Right cardiac atrium (tissue), 5 donors: ENCODE measurements at regions of chr1 and their contacts with region 1.

Region 1: DNA sequence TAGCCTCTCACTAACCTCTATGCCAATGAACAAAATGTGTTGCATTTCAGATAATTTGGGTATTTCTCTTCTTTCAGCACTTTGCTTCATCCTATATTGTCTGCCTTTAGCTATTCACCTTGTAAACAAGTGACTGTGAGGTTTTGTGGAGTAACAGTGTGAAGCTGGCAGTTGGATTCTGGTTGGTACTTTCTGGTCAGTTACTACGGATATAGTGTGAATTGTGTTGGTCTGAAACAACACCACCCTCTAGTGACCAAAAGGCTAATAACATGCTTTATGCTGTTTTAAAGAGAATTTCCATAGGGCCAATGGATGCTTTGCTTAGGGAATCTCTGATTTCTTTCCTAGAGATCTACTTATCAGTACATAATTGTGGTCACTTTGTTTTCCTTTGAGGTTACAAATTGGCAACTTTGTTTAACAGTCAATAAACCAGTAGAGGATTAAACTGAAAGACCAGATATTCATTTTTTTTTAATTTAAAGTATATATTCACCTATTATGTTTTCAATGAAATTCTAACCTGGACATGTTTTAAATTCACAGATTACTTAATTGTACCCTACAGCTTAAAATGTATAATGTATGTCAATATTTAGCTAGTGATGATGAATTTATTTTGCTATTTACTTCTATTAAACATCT is 2.5 kb upstream of the PTGER3 start:
- DNase-seq: no peak
- ATAC-seq: peak; percentile 27 to 50
- H3K4me3 ChIP-seq: no peak overlapping the region
- H3K27ac ChIP-seq: no peak overlapping the region
- H3K4me1 ChIP-seq: no peaks in the 10 kb centered on the region
- H3K27me3 ChIP-seq: no peaks in the 10 kb centered on the region

Region 2: GRCh38 chr1:70528590-70529333 is 521.3 kb before region 1 on chr1:
- intact Hi-C with region 1: loop called in 3 of 4 experiments (anchors 5 kb)
- DNase-seq: no peak
- ATAC-seq: peak; percentile 61 to 73
- H3K4me3 ChIP-seq: no peak overlapping the region
- H3K27ac ChIP-seq: no peak overlapping the region
- H3K4me1 ChIP-seq: no peaks in the 10 kb centered on the region
- H3K27me3 ChIP-seq: no peaks in the 10 kb centered on the region

Region 3: DNA sequence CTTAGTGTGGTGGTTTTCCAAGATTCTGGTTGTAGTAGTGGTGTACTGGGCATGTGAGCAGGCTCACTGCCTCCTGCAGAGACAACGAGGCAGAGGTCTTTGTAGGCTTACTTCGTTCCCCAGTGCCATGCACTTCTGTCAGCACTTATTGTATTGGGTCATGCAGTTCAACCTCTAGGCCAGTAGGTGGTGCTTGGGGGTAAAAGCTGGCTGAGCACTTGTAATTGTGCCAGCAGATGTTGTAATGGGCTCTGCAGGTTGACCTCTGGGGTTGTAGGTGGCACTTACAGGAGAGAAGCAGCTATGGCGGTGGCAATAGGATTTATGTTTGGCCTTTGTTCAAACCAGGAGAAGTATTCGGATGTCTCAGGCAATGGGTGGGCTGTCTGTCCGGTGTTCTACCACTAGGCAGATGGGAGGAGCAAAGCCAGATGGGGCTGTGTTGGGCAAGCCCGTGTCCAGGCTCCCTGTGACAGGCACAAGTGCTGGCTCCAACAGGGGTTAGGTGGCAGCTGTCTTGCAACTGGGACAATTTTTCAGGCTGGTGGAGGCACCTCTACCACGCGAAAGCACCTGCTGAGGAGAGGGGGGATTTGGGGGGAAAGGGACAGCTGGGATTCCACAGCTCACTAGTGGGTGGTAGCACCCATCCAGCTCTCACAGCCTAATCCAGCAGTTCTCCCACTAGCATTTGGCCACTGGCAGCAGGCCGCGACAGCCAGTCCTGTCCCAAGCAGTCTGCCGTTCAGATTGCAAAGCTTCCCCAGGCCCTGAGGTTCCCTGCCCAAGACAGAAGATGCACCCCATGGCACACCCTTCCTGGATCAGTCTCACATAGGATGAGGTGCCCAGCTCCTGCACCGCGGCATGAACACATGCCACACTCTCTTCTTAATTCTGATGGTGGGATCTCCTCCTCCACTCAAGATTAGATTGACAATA is 364.5 kb before region 1 on chr1:
- intact Hi-C with region 1: loop called (anchors 2 to 5 kb)
- DNase-seq: peak; percentile 42 to 67 (median 61)
- ATAC-seq: peak; percentile 84 to 86
- H3K4me3 ChIP-seq: no peak overlapping the region
- H3K27ac ChIP-seq: no peak overlapping the region
- H3K4me1 ChIP-seq: no peaks in the 10 kb centered on the region
- H3K27me3 ChIP-seq: no peaks in the 10 kb centered on the region